CD8-positive, alpha-beta memory T cell (primary cell): ENCODE measurements at regions of chr19 and their contacts with region 1.

Region 1: GRCh38 chr19:55624109-55625003 is at the start of gene ZNF784:
- DNase-seq: peak; percentile 90 to 96 (median 91)
- H3K4me3 ChIP-seq: peak within 1 kb of the TSS; percentile 63
- H3K4me3 Mint-ChIP-seq: peak within 1 kb of the TSS; percentile 86 to 96 (median 90)
- H3K27ac ChIP-seq: peak within 1 kb of the TSS; percentile 65
- H3K27ac Mint-ChIP-seq: peak within 1 kb of the TSS; percentile 91 to 99 (median 94)
- H3K4me1 ChIP-seq: peaks cover 47% of the 10 kb centered on the region
- H3K4me1 Mint-ChIP-seq: peaks cover 45 to 63% (median 60%) of the 10 kb centered on the region in 3 donors
- H3K27me3 ChIP-seq: no peaks in the 10 kb centered on the region
- H3K27me3 Mint-ChIP-seq: no peaks in the 10 kb centered on the region
- total RNA-seq, gene ZNF784: 2.6 to 2.9 TPM

Region 2: DNA sequence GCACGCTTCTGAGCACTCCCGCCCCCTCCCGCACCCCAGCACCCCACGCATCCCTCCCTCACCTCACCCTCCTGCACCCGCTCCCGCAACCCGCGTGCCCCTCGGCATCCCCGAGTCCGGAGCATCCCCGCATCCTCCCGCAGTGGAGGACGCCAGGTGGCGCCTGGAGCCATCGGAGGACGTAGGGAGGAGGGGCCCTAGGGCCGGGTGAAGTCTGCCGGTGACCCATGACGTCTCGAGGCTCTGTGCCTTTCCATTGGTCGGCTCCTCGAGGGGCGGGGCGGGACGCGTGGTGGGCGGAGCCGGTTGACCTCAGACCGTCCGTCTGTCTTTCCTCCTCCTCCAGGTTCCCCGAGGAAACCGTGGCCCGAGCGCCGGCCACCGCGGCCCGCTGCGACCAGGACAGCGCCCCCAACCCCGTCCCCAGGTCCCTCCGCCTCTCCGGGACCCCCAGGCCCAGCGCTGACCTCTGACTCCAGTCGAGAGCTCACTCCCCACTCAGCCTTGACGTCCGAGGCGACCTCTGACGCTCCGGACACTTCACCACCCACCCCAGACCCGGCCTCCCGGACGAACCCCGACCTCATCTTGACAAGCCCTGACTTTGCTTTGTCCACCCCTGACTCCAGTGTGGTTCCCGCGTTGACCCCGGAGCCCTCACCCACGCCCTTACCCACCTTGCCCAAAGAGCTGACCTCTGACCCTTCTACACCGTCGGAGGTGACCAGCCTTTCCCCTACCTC is 107.3 kb before region 1 on chr19:
- CTCF ChIA-PET with region 1: interaction called, 13 read pairs
- POLR2A ChIA-PET with region 1: interaction called, 7 read pairs
- DNase-seq: peak; percentile 85 to 93 (median 86)
- H3K4me3 ChIP-seq: peak overlapping the region; percentile 38
- H3K4me3 Mint-ChIP-seq: peak overlapping the region; percentile 51 to 84 (median 81)
- H3K27ac ChIP-seq: no peak overlapping the region
- H3K27ac Mint-ChIP-seq: peak overlapping the region; percentile 27 to 94 (median 86)
- H3K4me1 ChIP-seq: peaks cover 5% of the 10 kb centered on the region
- H3K4me1 Mint-ChIP-seq: peaks cover 3 to 4% (median 4%) of the 10 kb centered on the region in 3 donors
- H3K27me3 ChIP-seq: no peaks in the 10 kb centered on the region
- H3K27me3 Mint-ChIP-seq: peaks cover 3 to 15% of the 10 kb centered on the region in 2 donors

Region 3: DNA sequence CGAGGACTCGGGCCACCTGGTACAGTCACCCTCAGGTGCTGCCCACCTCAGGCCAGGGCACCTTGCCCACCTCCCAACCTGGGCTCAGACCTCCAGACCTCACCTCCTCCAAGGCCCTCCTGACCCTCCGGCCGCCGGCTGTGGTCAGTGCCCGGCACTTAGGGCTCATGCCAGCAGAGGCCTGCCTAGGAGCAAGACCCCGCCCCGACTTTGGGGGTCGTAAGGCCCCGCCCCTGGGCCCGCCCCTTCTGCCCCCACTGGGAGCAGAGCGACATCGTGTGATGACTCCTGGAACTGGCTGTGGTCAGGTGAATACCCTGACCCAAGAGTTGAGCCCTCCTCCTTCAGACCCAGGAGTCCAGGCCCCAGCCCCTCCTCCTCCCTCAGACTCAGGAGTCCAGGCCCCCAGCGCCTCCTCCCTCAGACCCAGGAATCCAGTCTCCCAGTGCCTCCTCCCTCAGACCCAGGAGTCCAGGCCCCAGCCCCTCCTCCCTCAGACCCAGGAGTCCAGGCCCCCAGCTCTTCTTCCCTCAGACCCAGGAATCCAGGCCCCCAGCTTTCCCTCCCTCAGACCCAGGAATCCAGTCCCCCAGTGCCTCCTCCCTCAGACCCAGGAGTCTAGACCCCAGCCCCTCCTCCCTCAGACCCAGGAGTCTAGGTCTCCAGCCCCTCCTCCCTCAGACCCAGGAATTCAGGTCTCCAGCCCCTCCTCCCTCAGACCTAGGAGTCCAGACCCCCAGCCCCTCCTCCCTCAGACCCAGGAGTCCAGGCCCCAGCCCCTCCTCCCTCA is 87.2 kb before region 1 on chr19 and contains the start of gene SBK2:
- CTCF ChIA-PET with region 1: no interaction called
- POLR2A ChIA-PET with region 1: no interaction called
- DNase-seq: no peak
- H3K4me3 ChIP-seq: no peak within 1 kb of the TSS
- H3K4me3 Mint-ChIP-seq: no peak within 1 kb of the TSS
- H3K27ac ChIP-seq: no peak within 1 kb of the TSS
- H3K27ac Mint-ChIP-seq: no peak within 1 kb of the TSS
- H3K4me1 ChIP-seq: no peaks in the 10 kb centered on the region
- H3K4me1 Mint-ChIP-seq: no peaks in the 10 kb centered on the region
- H3K27me3 ChIP-seq: no peaks in the 10 kb centered on the region
- H3K27me3 Mint-ChIP-seq: peaks cover 0 to 6% of the 10 kb centered on the region in 2 donors
- total RNA-seq, gene SBK2: not detected

Region 4: DNA sequence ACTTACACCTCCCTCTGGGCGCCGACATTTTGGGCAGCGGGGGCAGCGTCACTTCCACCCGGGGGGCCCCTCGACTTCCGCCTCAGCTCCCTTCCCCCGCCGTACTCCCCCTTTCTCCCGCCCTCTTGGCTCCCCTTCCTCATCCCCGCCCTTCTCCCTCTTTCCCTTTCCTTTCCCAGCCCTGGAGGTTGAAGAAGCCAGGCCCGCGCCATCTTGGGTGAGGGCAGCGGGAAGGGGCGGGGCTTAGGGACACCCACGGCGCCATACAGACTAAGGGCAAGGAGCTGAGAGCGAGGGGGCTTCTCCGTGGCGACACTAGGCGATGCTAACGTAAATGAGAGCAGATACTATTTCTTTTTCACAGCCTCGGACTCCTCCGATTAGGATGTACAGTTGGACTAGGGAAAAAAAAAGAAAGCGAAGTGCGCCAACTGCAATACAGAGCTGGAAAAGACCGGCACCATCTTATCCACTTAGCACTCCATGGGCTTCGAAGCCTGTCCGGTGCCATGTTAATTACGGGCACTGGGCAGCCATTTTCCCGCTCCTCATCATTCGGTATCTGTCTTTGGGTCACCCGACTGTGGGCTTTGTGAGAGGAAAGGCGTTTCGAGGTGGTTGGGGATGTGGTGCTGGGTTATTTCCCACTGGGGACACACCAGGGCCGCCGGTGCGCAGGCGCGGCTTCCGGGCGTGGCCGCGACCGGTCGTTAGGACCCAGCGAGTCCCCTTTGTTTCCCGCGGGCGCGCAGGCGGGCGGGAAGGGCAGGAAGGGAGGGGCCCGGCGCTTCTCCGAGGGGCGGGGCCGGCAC is 24.7 kb before region 1 on chr19 and contains the start of gene FIZ1:
- CTCF ChIA-PET with region 1: interaction called, 15 read pairs
- POLR2A ChIA-PET with region 1: interaction called, 34 read pairs
- DNase-seq: peak; percentile 92 to 98 (median 96)
- H3K4me3 ChIP-seq: peak within 1 kb of the TSS; percentile 99
- H3K4me3 Mint-ChIP-seq: peak within 1 kb of the TSS; percentile 95 to 100 (median 98)
- H3K27ac ChIP-seq: peak within 1 kb of the TSS; percentile 91
- H3K27ac Mint-ChIP-seq: peak within 1 kb of the TSS; percentile 91 to 100 (median 98)
- H3K4me1 ChIP-seq: peaks cover 20% of the 10 kb centered on the region
- H3K4me1 Mint-ChIP-seq: peaks cover 21 to 31% (median 28%) of the 10 kb centered on the region in 3 donors
- H3K27me3 ChIP-seq: no peaks in the 10 kb centered on the region
- H3K27me3 Mint-ChIP-seq: peaks cover 0 to 1% of the 10 kb centered on the region in 2 donors
- total RNA-seq, gene FIZ1: 23.9 to 25.8 TPM

Region 5: GRCh38 chr19:55643348-55644176 is 19.2 kb after region 1 on chr19 and contains the start of gene ZNF581:
- CTCF ChIA-PET with region 1: interaction called, 4 read pairs
- POLR2A ChIA-PET with region 1: interaction called, 11 read pairs
- DNase-seq: peak; percentile 65 to 84 (median 72)
- H3K4me3 ChIP-seq: peak within 1 kb of the TSS; percentile 95
- H3K4me3 Mint-ChIP-seq: peak within 1 kb of the TSS; percentile 84 to 98 (median 94)
- H3K27ac ChIP-seq: peak within 1 kb of the TSS; percentile 72
- H3K27ac Mint-ChIP-seq: peak within 1 kb of the TSS; percentile 85 to 98 (median 96)
- H3K4me1 ChIP-seq: peaks cover 34% of the 10 kb centered on the region
- H3K4me1 Mint-ChIP-seq: peaks cover 44 to 63% (median 58%) of the 10 kb centered on the region in 3 donors
- H3K27me3 ChIP-seq: no peaks in the 10 kb centered on the region
- H3K27me3 Mint-ChIP-seq: no peaks in the 10 kb centered on the region
- total RNA-seq, gene ZNF581: 32.8 to 34.4 TPM